Activated CD4-positive, alpha-beta memory T cell treated with anti-CD3 and anti-CD28 coated beads for 36 hours (primary cell): ENCODE measurements at regions of chr10 and their contacts with region 1.

Region 1: GRCh38 chr10:117137031-117137910 is 799 bp downstream of the VAX1 start:
- DNase-seq: no peak
- H3K4me3 Mint-ChIP-seq: no peak overlapping the region
- H3K27ac Mint-ChIP-seq: no peak overlapping the region
- H3K4me1 Mint-ChIP-seq: peaks cover 23% of the 10 kb centered on the region
- H3K27me3 Mint-ChIP-seq: peaks cover 71% of the 10 kb centered on the region

Region 2: DNA sequence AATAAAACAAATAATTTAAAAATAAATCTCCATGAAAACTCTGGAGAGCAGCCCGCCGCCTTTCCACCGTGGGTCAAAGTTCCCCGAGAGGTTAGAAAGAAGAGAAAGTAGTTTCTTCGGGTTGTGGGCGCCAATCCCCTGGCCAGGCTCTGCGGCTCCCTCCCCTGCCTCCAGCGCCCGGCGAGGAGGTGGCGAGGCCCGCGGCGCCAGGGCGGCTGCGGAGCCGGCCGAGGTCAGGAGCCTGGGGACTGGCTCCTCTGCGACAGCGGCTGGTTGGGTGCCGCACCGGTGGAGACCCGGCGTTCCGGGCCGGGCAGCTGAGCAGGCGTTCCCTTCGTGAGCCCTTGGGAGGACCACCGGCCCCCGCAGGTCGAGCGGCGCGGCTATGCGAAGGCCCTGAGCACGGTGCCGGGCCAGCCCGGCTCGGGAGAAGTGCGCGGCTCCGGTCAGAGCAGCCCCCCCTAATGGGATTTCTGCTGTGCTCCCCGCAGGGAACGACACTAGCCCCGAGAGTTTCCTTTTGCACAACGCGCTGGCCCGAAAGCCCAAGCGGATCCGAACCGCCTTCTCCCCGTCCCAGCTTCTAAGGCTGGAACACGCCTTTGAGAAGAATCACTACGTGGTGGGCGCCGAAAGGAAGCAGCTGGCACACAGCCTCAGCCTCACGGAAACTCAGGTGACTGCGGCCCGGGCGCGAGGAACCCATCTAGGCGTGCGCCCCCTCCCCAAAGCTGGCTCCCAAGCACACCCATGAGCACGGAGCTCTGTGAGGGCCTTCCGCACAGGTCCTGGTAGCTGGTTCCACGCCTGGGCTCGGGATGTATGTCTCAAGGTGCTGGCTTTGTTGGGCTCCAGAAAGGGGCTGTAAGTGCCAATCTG is 408.1 kb after region 1 on chr10:
- CTCF ChIA-PET with region 1: no interaction called
- POLR2A ChIA-PET with region 1: no interaction called
- intact Hi-C with region 1: loop called (anchors 2 kb)
- DNase-seq: no peak
- H3K4me3 Mint-ChIP-seq: no peak overlapping the region
- H3K27ac Mint-ChIP-seq: no peak overlapping the region
- H3K4me1 Mint-ChIP-seq: peaks cover 37% of the 10 kb centered on the region
- H3K27me3 Mint-ChIP-seq: peaks cover 78% of the 10 kb centered on the region